Motor neuron (in vitro differentiated cells): ENCODE measurements at regions of chr4 and their contacts with region 1.

Region 1: GRCh38 chr4:94115687-94116086 is 92.0 kb upstream of the SMARCAD1 start:
- ATAC-seq: peak in 6 of 8 experiments; percentile 18 to 98 (median 94)
- H3K4me3 ChIP-seq: no peak overlapping the region
- H3K27ac ChIP-seq: no peak overlapping the region
- H3K4me1 ChIP-seq: peaks cover 0 to 3% of the 10 kb centered on the region in 2 donors

Region 2: GRCh38 chr4:93684571-93684970 is 431.1 kb before region 1 on chr4:
- in situ Hi-C with region 1: no loop called
- ATAC-seq: no peak
- H3K4me3 ChIP-seq: no peak overlapping the region
- H3K27ac ChIP-seq: no peak overlapping the region
- H3K4me1 ChIP-seq: no peaks in the 10 kb centered on the region

Region 3: DNA sequence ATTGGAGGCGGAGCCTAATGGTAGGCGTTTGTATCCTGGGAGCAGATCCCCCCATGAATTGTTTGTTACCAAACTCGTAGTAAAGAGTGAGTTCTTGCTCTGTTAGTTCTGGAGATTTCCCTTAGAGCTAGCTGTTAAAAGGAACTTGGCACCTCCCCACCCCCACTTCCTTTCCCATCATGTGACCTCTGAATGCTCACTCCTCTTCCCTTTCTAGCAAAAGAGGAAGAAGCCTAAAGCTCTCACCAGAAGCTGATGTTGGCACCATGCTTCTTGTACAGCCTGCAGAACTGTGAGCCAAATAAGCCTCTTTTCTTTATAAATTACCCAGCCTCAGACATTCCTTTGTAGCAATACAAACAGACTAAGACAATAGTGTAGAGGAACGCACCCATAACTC is 301.0 kb before region 1 on chr4:
- in situ Hi-C with region 1: loop called in 1 of 9 experiments (anchors 25 kb)
- ATAC-seq: no peak
- H3K4me3 ChIP-seq: no peak overlapping the region
- H3K27ac ChIP-seq: no peak overlapping the region
- H3K4me1 ChIP-seq: no peaks in the 10 kb centered on the region